AG04450 (cell line): ENCODE measurements at regions of chr10 and their contacts with region 1.

Region 1: GRCh38 chr10:95601116-95601719 is 40.0 kb upstream of the SORBS1 start:
- DNase-seq: peak; percentile 70
- H3K4me3 ChIP-seq: no peak overlapping the region
- H3K27ac ChIP-seq: no peak overlapping the region
- H3K27me3 ChIP-seq: no peaks in the 10 kb centered on the region
- CTCF ChIP-seq: peak; percentile 98

Region 2: GRCh38 chr10:94627511-94627910 is 973.7 kb before region 1 on chr10:
- CTCF ChIA-PET with region 1: interaction called, 10 read pairs
- POLR2A ChIA-PET with region 1: no interaction called
- DNase-seq: no peak
- H3K4me3 ChIP-seq: no peak overlapping the region
- H3K27ac ChIP-seq: no peak overlapping the region
- H3K27me3 ChIP-seq: no peaks in the 10 kb centered on the region
- CTCF ChIP-seq: no peak

Region 3: DNA sequence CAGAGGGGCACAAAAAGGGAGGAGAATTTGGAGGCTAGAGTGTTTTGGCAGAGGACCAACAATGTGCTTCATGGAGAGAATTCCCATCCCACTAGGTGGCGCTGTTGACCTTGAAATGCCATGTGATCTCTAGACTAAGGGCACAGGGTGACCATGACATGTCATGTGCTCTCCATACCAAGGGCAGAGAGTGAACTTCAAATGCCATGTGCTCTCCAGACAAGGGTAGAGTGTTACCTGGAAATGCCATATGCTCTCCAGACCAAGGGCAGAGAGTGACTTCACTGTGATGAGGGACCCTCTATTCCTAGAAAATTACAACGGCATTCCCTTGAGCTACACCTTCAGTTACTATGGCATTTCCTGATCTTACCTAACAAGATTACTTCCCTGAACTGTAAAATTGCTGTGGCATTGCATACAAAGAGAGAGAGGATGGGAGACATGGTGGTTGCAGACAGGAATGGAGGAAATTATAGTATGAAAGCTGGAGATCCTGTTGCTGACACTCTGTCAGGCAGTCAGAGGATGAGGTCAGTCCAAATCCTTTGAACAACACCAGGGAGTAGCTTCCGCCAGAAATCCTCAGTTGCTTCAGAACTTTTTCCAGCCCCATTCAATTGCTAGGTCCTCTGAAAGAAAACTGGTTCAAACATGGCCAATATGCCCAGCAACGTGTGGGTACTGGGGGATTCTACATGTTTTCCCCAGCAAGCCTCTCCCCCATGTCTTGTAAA is 468.0 kb before region 1 on chr10:
- CTCF ChIA-PET with region 1: interaction called, 10 read pairs
- POLR2A ChIA-PET with region 1: no interaction called
- DNase-seq: peak; percentile 39
- H3K4me3 ChIP-seq: no peak overlapping the region
- H3K27ac ChIP-seq: no peak overlapping the region
- H3K27me3 ChIP-seq: peaks cover 3% of the 10 kb centered on the region
- CTCF ChIP-seq: peak; percentile 78

Region 4: GRCh38 chr10:95374597-95375209 is 226.5 kb before region 1 on chr10:
- CTCF ChIA-PET with region 1: interaction called, 24 read pairs
- POLR2A ChIA-PET with region 1: no interaction called
- DNase-seq: peak; percentile 10
- H3K4me3 ChIP-seq: no peak overlapping the region
- H3K27ac ChIP-seq: no peak overlapping the region
- H3K27me3 ChIP-seq: peaks cover 21% of the 10 kb centered on the region
- CTCF ChIP-seq: peak; percentile 70

Region 5: DNA sequence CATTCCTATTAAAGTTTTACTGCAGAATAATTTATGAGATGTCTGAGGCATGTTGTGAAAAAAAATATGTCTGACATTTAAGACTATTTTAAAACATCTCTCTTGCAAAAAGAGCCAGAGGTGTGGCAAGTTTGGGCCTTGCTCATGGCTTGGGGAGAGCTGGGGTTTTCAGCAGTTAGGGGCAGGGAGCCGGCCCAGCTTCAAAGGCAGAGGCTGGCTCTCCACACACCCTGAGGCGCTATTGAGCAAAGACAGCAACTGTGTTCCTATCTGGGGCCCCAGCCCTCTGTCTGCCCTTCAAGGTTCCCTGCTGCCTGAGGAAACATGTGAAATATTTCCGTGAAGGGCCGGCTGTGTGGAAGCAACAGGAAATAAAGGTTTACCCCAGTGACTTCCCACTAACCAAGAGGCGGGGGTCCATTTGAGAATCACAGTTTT is 134.0 kb before region 1 on chr10:
- CTCF ChIA-PET with region 1: no interaction called
- POLR2A ChIA-PET with region 1: interaction called, 15 read pairs
- DNase-seq: no peak
- H3K4me3 ChIP-seq: no peak overlapping the region
- H3K27ac ChIP-seq: no peak overlapping the region
- H3K27me3 ChIP-seq: no peaks in the 10 kb centered on the region
- CTCF ChIP-seq: no peak

Region 6: DNA sequence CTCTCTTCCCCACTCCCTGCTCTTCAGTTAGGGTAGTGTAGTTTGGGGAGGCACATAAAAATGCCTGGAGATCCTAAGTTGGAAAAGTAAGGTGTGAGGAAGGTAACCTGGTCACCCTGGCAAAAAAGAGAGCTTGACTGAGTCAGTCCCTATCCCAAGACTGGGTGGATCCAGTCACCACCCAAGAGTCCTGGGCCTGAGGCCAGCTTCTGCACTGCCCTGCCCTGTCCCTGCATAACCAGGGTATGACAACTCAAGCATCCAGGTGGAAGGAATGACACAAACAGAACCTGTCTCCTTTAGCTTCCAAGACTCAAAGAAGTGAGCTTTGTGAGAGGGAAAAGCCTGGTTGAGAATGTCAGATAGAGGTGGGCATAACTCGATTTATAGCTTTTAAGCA is 13.2 kb before region 1 on chr10:
- CTCF ChIA-PET with region 1: interaction called, 15 read pairs
- POLR2A ChIA-PET with region 1: no interaction called
- DNase-seq: no peak
- H3K4me3 ChIP-seq: no peak overlapping the region
- H3K27ac ChIP-seq: no peak overlapping the region
- H3K27me3 ChIP-seq: no peaks in the 10 kb centered on the region
- CTCF ChIP-seq: no peak

Region 7: GRCh38 chr10:95864906-95865813 is 263.9 kb after region 1 on chr10:
- CTCF ChIA-PET with region 1: interaction called, 10 read pairs
- POLR2A ChIA-PET with region 1: no interaction called
- DNase-seq: peak; percentile 63
- H3K4me3 ChIP-seq: no peak overlapping the region
- H3K27ac ChIP-seq: peak overlapping the region; percentile 0
- H3K27me3 ChIP-seq: no peaks in the 10 kb centered on the region
- CTCF ChIP-seq: peak; percentile 87